ENCODE measurements at regions of chr7 and their contacts with region 1.

Region 1: DNA sequence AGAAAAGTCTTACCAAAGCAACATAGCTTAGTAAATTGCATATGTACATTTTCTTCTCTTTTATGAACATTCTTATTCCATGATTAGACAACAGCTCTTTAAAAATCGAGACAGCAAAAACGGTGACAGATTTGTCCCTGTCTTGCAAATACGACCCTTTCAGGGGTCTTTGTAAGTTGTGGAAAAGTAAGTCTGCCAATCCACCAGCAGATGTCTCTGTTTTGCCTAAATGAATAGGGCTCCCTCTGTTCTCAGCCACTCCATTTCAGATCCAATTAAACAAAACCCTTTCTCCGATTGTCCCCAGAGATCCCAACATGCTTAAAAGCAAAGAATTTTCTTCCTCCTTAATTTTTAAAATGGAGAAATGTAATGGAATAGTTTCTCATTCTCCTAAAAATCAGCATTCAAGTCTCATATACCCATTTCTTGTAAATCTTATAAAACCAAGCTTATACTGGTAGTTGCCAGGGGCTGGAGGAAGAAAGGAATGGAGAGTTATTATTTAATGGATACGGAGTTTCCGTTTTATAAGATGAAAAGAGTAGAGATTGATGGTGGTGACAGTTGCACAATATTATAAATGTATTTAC is 61.0 kb upstream of the NFE2L3 start:
- DNase-seq: peak; percentile 36
- H3K4me3 Mint-ChIP-seq: peak overlapping the region; percentile 14
- H3K27ac Mint-ChIP-seq: peak overlapping the region; percentile 37
- H3K4me1 Mint-ChIP-seq: peaks cover 29% of the 10 kb centered on the region
- H3K27me3 Mint-ChIP-seq: no peaks in the 10 kb centered on the region

Region 2: DNA sequence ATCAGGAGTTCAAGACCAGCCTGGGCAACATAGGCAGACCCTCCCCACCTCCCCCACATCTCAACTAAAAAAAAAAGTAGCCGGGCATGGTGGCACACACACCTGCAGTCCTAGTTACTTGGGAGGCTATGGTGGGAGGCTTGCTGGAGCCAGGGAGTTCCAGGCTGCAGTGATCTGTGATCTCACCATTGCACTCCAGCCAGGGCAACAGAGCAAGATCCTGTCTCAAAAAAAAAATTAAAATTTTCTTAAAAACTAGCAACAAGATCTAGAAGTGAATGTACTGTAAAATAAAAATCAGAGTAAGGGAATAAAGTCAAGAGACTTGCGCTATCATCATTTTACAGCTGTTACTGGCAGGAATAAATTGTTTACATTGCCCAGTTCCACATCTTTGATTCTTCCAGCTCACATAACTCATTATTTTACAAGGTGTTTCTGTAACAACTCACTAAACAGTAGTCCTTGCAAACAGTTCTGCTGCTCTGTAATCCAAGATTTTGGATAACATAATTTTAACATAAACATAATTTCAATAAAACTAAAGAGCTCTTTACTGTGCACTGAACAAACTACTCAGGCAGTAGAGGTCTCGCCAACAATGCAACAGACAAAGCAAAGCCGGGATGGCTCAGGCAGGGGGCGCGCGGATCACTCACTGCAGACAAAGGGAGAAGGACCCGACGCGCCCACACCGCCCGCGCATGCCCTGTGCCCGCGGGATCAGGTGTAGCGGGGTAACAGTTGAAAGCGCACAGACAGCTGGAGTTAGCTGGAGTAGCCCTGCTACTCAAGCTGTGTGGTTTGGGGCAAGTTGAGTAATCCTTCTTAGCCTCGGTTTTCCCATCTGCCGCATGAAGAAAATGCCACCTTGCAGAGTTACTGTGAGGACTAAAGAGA is 12.3 kb before region 1 on chr7:
- CTCF ChIA-PET with region 1: interaction called, 34 read pairs
- POLR2A ChIA-PET with region 1: interaction called, 6 read pairs
- DNase-seq: peak; percentile 84
- H3K4me3 Mint-ChIP-seq: no peak overlapping the region
- H3K27ac Mint-ChIP-seq: no peak overlapping the region
- H3K4me1 Mint-ChIP-seq: peaks cover 9% of the 10 kb centered on the region
- H3K27me3 Mint-ChIP-seq: peaks cover 53% of the 10 kb centered on the region

Region 3: GRCh38 chr7:26151953-26152781 is 61.1 kb after region 1 on chr7 and contains the start of gene NFE2L3:
- CTCF ChIA-PET with region 1: interaction called, 12 read pairs
- POLR2A ChIA-PET with region 1: no interaction called
- DNase-seq: peak; percentile 85
- H3K4me3 Mint-ChIP-seq: peak within 1 kb of the TSS; percentile 90
- H3K27ac Mint-ChIP-seq: peak within 1 kb of the TSS; percentile 98
- H3K4me1 Mint-ChIP-seq: peaks cover 62% of the 10 kb centered on the region
- H3K27me3 Mint-ChIP-seq: no peaks in the 10 kb centered on the region
- total RNA-seq, gene NFE2L3: 12.0 to 15.3 TPM

Region 4: GRCh38 chr7:26200444-26201246 is 109.6 kb after region 1 on chr7 and contains the start of gene HNRNPA2B1:
- CTCF ChIA-PET with region 1: interaction called, 30 read pairs
- POLR2A ChIA-PET with region 1: no interaction called
- DNase-seq: peak; percentile 98
- H3K4me3 Mint-ChIP-seq: peak within 1 kb of the TSS; percentile 97
- H3K27ac Mint-ChIP-seq: peak within 1 kb of the TSS; percentile 100
- H3K4me1 Mint-ChIP-seq: peaks cover 44% of the 10 kb centered on the region
- H3K27me3 Mint-ChIP-seq: no peaks in the 10 kb centered on the region
- total RNA-seq, gene HNRNPA2B1: 649 to 781 TPM

Region 5: GRCh38 chr7:26305463-26306273 is 214.6 kb after region 1 on chr7:
- CTCF ChIA-PET with region 1: interaction called, 4 read pairs
- POLR2A ChIA-PET with region 1: interaction called, 11 read pairs
- DNase-seq: peak; percentile 52
- H3K4me3 Mint-ChIP-seq: no peak overlapping the region
- H3K27ac Mint-ChIP-seq: peak overlapping the region; percentile 59
- H3K4me1 Mint-ChIP-seq: peaks cover 22% of the 10 kb centered on the region
- H3K27me3 Mint-ChIP-seq: no peaks in the 10 kb centered on the region

Measured in activated CD4-positive, alpha-beta T cell treated with anti-CD3 and anti-CD28 coated beads, Interleukin-2, amount 10 ng/mL, durations not matched to agents 7 days and 5 days (primary cell).